ENCODE measurements at regions of chr2 and their contacts with region 1.

Region 1: DNA sequence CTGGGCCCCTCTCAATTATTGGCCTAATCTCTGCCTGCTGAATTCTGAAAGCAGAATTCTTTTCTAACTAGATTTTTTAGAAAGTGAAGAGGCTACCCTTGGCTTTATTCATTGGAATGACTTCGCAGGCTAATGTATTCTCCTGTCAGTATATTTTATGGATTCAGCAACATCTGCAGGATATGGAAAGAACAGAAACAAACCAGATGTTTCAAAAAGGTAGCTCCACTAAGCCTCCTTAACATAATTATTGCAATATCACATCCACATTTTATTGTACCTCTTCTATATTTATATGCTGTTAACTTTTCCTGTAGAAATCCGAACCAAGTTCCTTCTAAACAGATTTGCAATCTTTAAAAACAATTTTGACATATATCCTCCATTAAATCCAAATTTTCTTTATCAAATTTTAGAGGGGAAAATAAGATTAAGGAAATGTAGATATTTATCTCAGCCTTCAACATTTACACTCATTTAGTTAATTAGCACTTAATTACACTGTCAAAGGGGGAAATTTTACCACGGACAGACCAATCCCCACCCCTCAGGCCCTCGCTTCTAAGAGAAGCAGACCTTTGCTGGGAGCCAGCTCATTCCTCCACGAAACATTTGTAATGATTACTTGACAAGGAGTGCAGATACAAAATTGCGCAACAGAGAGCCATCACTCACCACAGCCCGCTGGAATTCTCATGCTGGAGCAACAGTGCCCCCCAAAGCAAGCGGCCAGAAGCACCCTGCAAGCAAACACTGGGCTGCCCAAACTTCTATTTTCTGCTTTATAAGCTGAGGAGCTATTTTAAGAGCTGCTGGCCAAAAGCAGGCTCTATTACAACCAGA is 253.4 kb downstream of the ETAA1 start:
- DNase-seq: peak; percentile 79 to 88 (median 85)
- ATAC-seq: peak; percentile 94 to 95 (median 94)
- H3K4me3 ChIP-seq: no peak overlapping the region
- H3K27ac ChIP-seq: peak overlapping the region in 11 of 12 donors; percentile 17 to 84 (median 77)
- H3K4me1 ChIP-seq: peaks cover 0 to 39% (median 21%) of the 10 kb centered on the region in 12 donors
- H3K27me3 ChIP-seq: no peaks in the 10 kb centered on the region
- CTCF ChIP-seq: peak; percentile 25 to 83 (median 66)
- POLR2A ChIP-seq: no peak

Region 2: GRCh38 chr2:67340133-67341011 is 310.1 kb before region 1 on chr2:
- intact Hi-C with region 1: loop called in 1 of 10 experiments (anchors 5 kb)
- DNase-seq: peak in 4 of 5 donors; percentile 10 to 67 (median 42)
- ATAC-seq: peak; percentile 96 to 98 (median 98)
- H3K4me3 ChIP-seq: no peak overlapping the region
- H3K27ac ChIP-seq: no peak overlapping the region
- H3K4me1 ChIP-seq: peaks cover 0 to 15% (median 1%) of the 10 kb centered on the region in 12 donors
- H3K27me3 ChIP-seq: peaks cover 0 to 7% (median 0%) of the 10 kb centered on the region in 9 donors
- CTCF ChIP-seq: peak in 1 of 12 donors; percentile 11
- POLR2A ChIP-seq: no peak

Region 3: DNA sequence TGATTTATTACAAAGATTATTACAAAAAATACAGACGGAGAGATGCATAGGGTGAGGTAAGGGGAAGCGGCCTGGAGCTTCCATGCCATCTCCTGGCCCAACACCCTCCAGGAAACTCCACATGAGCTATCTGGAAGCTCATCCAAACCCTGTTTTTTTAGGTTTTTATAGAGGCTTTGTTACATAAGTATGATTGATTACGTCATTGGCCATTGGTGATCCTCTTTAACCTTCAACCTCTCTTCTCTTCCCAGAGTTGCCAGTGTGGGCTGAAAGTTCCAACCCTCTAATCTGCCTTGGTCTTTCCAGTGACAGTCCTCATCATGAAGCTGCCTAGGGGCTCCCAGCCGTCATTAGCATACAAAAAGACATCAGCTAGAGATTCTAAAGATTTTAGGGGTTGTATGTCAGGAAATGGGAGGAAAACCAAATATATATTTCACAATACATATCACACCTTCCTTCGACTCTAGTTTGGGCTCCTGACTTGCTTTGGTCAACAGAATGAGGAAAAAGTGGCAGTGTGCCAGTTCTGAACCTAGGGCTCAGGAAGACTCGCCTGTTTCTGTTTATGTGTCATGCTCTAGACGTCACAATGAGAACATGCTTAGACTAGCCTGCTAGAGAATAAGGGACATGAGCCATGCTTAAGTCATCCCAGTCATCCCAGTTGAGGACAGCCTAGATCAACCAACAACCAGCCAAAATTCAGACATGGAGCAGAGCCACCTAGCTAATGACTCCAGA is 199.3 kb before region 1 on chr2:
- intact Hi-C with region 1: loop called in 1 of 10 experiments (anchors 5 kb)
- DNase-seq: no peak
- ATAC-seq: no peak
- H3K4me3 ChIP-seq: no peak overlapping the region
- H3K27ac ChIP-seq: no peak overlapping the region
- H3K4me1 ChIP-seq: peaks cover 0 to 15% (median 0%) of the 10 kb centered on the region in 12 donors
- H3K27me3 ChIP-seq: no peaks in the 10 kb centered on the region
- CTCF ChIP-seq: no peak
- POLR2A ChIP-seq: no peak

Region 4: GRCh38 chr2:67561457-67561965 is 89.0 kb before region 1 on chr2:
- intact Hi-C with region 1: loop called in 2 of 10 experiments (anchors 2 to 5 kb)
- DNase-seq: peak; percentile 45 to 88 (median 76)
- ATAC-seq: peak; percentile 78 to 95 (median 87)
- H3K4me3 ChIP-seq: no peak overlapping the region
- H3K27ac ChIP-seq: peak overlapping the region; percentile 43 to 91 (median 70)
- H3K4me1 ChIP-seq: peaks cover 0 to 19% (median 7%) of the 10 kb centered on the region in 12 donors
- H3K27me3 ChIP-seq: no peaks in the 10 kb centered on the region
- CTCF ChIP-seq: no peak
- POLR2A ChIP-seq: no peak

Region 5: GRCh38 chr2:67581751-67582150 is 68.8 kb before region 1 on chr2:
- intact Hi-C with region 1: no loop called
- DNase-seq: no peak
- ATAC-seq: no peak
- H3K4me3 ChIP-seq: no peak overlapping the region
- H3K27ac ChIP-seq: no peak overlapping the region
- H3K4me1 ChIP-seq: no peaks in the 10 kb centered on the region
- H3K27me3 ChIP-seq: no peaks in the 10 kb centered on the region
- CTCF ChIP-seq: no peak
- POLR2A ChIP-seq: no peak